ENCODE measurements at regions of chr2 and their contacts with region 1.

Region 1: DNA sequence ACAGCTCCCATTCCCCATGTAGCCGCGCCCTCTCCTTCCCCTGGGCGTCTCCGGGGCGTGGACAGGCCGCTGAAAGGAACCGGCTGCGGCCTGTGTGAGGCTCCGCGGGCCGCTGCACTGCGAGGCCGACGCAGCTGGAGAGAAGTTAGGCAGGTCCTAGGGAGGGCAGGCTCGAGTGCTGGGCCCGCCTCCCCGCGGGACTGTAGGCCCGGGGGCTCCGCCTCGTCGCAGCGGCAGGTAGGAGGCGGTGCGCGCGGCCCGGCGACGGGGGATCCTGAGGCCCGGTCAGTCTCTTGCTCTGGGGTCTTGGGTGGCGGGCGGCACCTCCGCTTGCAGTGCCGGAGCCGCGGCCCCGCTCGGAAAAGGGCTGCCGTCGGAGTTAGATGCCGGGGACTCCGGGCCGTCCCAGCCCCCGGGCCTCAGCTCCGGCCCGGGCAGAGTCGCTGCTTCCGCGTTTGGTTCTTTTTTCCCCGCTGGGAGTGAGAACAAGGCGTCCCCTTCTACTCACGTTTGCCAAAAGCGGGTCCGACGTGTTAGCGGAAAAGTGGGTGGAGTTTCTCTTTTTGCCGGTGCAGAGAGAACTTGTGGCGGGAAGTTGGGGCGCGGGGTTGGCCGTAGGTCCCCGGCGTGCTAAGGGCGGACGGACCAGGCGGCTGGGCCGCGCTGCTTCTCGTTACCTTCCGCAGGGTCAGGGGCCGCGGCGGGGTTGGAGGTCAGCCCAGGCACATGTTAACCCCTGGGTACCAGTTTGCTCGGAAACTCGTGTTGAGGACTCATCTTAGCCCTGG is at the start of gene VRK2:
- DNase-seq: peak; percentile 63 to 91
- H3K4me3 ChIP-seq: peak within 1 kb of the TSS; percentile 71 to 72
- H3K27ac ChIP-seq: peak within 1 kb of the TSS; percentile 92 to 94
- H3K4me1 ChIP-seq: peaks cover 0 to 7% of the 10 kb centered on the region in 2 donors
- H3K27me3 ChIP-seq: no peaks in the 10 kb centered on the region
- CTCF ChIP-seq: peak in 1 of 3 experiments; percentile 19
- total RNA-seq, gene VRK2: 15.8 TPM

Region 2: DNA sequence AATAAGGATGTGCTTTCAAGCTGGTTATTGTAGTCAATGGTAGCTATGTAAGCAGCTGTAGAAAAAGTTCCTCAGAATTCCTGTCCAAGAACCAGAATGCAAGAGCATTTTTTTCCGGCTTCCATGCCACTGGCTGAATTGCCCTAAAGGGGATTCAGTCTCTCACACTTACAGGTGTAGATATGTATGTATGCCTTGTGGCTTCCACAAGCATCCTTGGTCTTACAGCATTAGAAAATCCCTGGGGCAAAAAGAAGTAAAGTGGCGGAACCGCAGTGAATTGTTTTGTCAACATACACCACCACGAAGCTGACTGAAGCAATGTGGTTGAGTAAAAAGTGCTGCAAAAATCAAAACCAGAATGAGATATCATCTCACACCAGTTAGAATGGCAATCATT is 139.7 kb after region 1 on chr2:
- intact Hi-C with region 1: no loop called
- DNase-seq: no peak
- H3K4me3 ChIP-seq: no peak overlapping the region
- H3K27ac ChIP-seq: no peak overlapping the region
- H3K4me1 ChIP-seq: no peaks in the 10 kb centered on the region
- H3K27me3 ChIP-seq: no peaks in the 10 kb centered on the region
- CTCF ChIP-seq: no peak

Region 3: GRCh38 chr2:58240670-58241545 is 194.1 kb after region 1 on chr2 and contains the start of gene FANCL:
- intact Hi-C with region 1: loop called (anchors 2 kb)
- DNase-seq: peak; percentile 15 to 92
- H3K4me3 ChIP-seq: peak within 1 kb of the TSS; percentile 79 to 98
- H3K27ac ChIP-seq: peak within 1 kb of the TSS; percentile 70 to 82
- H3K4me1 ChIP-seq: peaks cover 0 to 4% of the 10 kb centered on the region in 2 donors
- H3K27me3 ChIP-seq: no peaks in the 10 kb centered on the region
- CTCF ChIP-seq: no peak
- total RNA-seq, gene FANCL: 3.2 TPM